Activated T-helper 2 cell treated with anti-CD3 and anti-CD28 coated beads, Interferon-gamma antibody, Interleukin-2, Interleukin-4, amounts not matched to agents 10 μg/mL and 5 μg/mL and 100 μg/mL, durations not matched to agents 14 hours and 24 hours and 36 hours (primary cell): ENCODE measurements at regions of chr7 and their contacts with region 1.

Region 1: GRCh38 chr7:132654150-132654549 is 77.9 kb upstream of the PLXNA4 start:
- DNase-seq: no peak
- H3K4me3 Mint-ChIP-seq: peak overlapping the region; percentile 62
- H3K27ac Mint-ChIP-seq: peak overlapping the region; percentile 64
- H3K4me1 Mint-ChIP-seq: peaks cover 38% of the 10 kb centered on the region
- H3K27me3 Mint-ChIP-seq: no peaks in the 10 kb centered on the region

Region 2: DNA sequence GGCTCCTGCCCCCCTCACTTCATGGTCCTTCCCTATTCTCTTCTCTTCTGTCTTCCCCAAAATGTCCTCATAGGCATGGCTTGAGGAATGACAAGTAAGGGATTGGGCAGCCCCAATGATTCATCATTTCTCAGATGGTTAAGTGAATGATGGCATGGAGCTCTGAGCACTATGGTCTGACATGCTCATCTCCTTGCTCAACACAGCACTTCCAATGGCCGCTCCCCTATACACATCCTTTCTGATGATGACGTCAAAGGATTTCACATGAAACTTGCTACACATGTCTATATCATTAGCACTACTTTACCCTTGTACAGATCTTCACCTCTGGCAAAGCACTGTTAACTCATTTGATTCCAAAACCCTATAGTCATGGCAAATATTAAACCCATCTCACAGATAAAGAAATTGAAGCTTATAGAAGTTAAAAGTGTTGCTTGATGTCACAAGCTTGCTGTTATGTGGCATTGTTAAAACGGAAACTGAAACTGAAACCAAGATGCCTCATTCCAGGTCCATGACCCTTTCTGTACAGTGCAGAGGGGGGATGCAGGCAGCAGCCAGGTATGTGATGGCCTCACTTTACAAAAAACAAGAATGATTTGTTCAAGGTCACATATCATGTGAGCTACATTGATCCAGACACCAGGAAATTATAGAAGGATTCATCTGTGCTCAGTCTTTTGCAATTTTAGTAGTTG is 12.1 kb after region 1 on chr7:
- intact Hi-C with region 1: loop called (anchors 1 kb)
- DNase-seq: no peak
- H3K4me3 Mint-ChIP-seq: no peak overlapping the region
- H3K27ac Mint-ChIP-seq: peak overlapping the region; percentile 13
- H3K4me1 Mint-ChIP-seq: peaks cover 8% of the 10 kb centered on the region
- H3K27me3 Mint-ChIP-seq: no peaks in the 10 kb centered on the region